ENCODE measurements at regions of chr11 and their contacts with region 1.

Region 1: GRCh38 chr11:12587333-12587991 is 86.8 kb upstream of the TEAD1 start:
- DNase-seq: no peak
- ATAC-seq: no peak
- H3K4me3 Mint-ChIP-seq: no peak overlapping the region
- H3K27ac Mint-ChIP-seq: no peak overlapping the region
- H3K4me1 Mint-ChIP-seq: no peaks in the 10 kb centered on the region
- H3K27me3 Mint-ChIP-seq: peaks cover 3% of the 10 kb centered on the region
- CTCF ChIP-seq: no peak

Region 2: GRCh38 chr11:12599408-12600143 is 12.1 kb after region 1 on chr11:
- CTCF ChIA-PET with region 1: interaction called, 14 read pairs
- POLR2A ChIA-PET with region 1: no interaction called
- intact Hi-C with region 1: no loop called
- DNase-seq: peak; percentile 46
- ATAC-seq: no peak
- H3K4me3 Mint-ChIP-seq: no peak overlapping the region
- H3K27ac Mint-ChIP-seq: no peak overlapping the region
- H3K4me1 Mint-ChIP-seq: peaks cover 16% of the 10 kb centered on the region
- H3K27me3 Mint-ChIP-seq: peaks cover 27% of the 10 kb centered on the region
- CTCF ChIP-seq: peak; percentile 83